Vagina (tissue), 2 donors: ENCODE measurements at regions of chr5 and their contacts with region 1.

Region 1: DNA sequence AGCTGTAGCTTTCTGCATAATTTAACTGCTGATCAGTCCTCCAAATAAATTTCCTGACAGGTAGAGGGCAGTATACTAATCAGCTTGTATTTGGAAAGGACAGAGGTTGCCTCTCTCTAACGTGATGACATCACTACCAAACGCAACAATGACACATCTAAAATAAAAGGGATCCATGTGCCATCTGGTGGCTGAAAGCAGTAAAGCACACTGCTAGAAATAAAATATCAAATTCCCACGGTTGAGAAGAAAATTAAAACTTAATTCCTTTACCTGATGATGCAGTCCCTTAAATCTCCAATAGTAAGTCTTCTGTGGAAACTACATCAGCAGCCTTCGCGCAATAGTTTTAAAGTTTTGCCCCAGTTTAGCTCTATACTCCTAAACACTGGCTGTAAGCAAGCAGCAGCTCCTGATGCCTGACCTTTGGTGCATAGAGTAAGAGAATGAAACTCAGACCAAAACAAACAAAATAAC is 54.5 kb downstream of the DIAPH1 start:
- DNase-seq: no peak
- H3K4me3 ChIP-seq: no peak overlapping the region
- H3K27ac ChIP-seq: peak overlapping the region; percentile 42
- H3K4me1 ChIP-seq: peaks cover 16% of the 10 kb centered on the region
- H3K27me3 ChIP-seq: no peaks in the 10 kb centered on the region
- CTCF ChIP-seq: peak; percentile 98 to 100 (median 99)
- POLR2A ChIP-seq: no peak

Region 2: GRCh38 chr5:141320225-141321169 is 243.8 kb before region 1 on chr5 and contains the start of gene TAF7:
- intact Hi-C with region 1: loop called (anchors 5 kb)
- DNase-seq: no peak
- H3K4me3 ChIP-seq: peak within 1 kb of the TSS; percentile 74 to 95
- H3K27ac ChIP-seq: peak within 1 kb of the TSS; percentile 93
- H3K4me1 ChIP-seq: peaks cover 6% of the 10 kb centered on the region
- H3K27me3 ChIP-seq: no peaks in the 10 kb centered on the region
- CTCF ChIP-seq: peak; percentile 28 to 61 (median 35)
- POLR2A ChIP-seq: peak in 1 of 2 donors; percentile 91
- total RNA-seq, gene TAF7: 53.8 TPM

Region 3: GRCh38 chr5:141349917-141350619 is 214.2 kb before region 1 on chr5 and contains the start of gene PCDHGB1:
- intact Hi-C with region 1: no loop called
- DNase-seq: no peak
- H3K4me3 ChIP-seq: no peak within 1 kb of the TSS
- H3K27ac ChIP-seq: no peak within 1 kb of the TSS
- H3K4me1 ChIP-seq: no peaks in the 10 kb centered on the region
- H3K27me3 ChIP-seq: no peaks in the 10 kb centered on the region
- CTCF ChIP-seq: no peak
- POLR2A ChIP-seq: no peak
- total RNA-seq, gene PCDHGB1: 3.9 TPM

Region 4: DNA sequence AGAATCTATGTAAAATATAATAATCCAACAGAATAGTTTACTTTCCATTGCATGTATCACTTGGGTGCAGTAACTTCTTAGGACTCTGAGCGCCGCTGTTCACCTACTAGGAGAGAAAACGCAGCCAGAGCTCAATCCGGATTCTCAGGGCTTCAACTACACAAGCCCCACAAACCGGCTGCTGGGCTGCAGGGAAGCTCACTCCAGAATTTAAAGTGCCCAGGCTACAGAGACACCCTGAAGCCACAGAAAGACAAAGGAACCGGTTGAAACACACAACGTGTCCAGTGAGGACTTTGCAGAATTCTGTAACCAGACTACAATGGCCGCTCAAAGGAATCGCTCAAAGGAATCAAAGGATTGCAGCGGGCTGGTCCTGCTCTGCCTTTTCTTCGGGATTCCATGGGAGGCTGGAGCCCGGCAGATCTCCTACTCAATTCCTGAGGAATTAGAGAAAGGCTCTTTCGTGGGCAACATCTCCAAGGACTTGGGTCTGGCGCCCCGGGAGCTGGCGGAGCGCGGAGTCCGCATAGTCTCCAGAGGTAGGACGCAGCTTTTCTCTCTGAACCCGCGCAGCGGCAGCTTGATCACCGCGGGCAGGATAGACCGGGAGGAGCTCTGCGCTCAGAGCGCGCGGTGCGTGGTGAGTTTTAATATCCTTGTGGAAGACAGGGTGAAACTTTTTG is 151.3 kb before region 1 on chr5 and contains the start of gene PCDHGA10:
- intact Hi-C with region 1: loop called (anchors 10 kb)
- DNase-seq: no peak
- H3K4me3 ChIP-seq: peak within 1 kb of the TSS; percentile 10 to 26
- H3K27ac ChIP-seq: no peak within 1 kb of the TSS
- H3K4me1 ChIP-seq: no peaks in the 10 kb centered on the region
- H3K27me3 ChIP-seq: no peaks in the 10 kb centered on the region
- CTCF ChIP-seq: peak in 1 of 3 experiments; percentile 19
- POLR2A ChIP-seq: no peak
- total RNA-seq, gene PCDHGA10: 10.6 TPM

Region 5: GRCh38 chr5:141524604-141525597 is 39.4 kb before region 1 on chr5:
- intact Hi-C with region 1: loop called (anchors 5 kb)
- DNase-seq: peak in 1 of 2 donors; percentile 96
- H3K4me3 ChIP-seq: no peak overlapping the region
- H3K27ac ChIP-seq: peak overlapping the region; percentile 80
- H3K4me1 ChIP-seq: peaks cover 72% of the 10 kb centered on the region
- H3K27me3 ChIP-seq: no peaks in the 10 kb centered on the region
- CTCF ChIP-seq: peak; percentile 93 to 99 (median 96)
- POLR2A ChIP-seq: no peak